Right ventricle myocardium inferior (tissue), 1 donor: ENCODE measurements at regions of chr10 and their contacts with region 1.

Region 1: DNA sequence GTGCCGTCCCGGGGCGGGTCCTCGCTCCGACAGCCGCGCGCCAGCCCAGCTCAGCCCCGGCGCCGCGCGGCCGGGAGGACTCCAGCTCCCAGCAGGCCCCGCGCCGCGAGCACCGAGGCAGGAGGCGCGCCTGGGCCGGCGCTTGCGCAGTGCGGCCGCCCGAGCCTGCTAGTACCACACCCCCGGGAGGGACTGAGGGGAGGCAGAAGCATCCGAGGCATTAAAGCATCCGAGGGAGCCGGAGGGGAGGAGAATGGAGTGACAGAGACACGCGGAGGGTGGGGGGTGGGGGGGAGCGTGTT is at the start of gene GRK5:
- DNase-seq: peak; percentile 99
- ATAC-seq: peak; percentile 96
- total RNA-seq, gene GRK5: 48.6 TPM

Region 2: GRCh38 chr10:119270762-119271366 is 63.5 kb after region 1 on chr10:
- intact Hi-C with region 1: loop called (anchors 2 kb)
- DNase-seq: peak; percentile 93
- ATAC-seq: peak; percentile 79

Region 3: GRCh38 chr10:119341459-119342301 is 134.4 kb after region 1 on chr10:
- intact Hi-C with region 1: loop called (anchors 2 kb)
- DNase-seq: peak; percentile 88
- ATAC-seq: peak; percentile 90

Region 4: DNA sequence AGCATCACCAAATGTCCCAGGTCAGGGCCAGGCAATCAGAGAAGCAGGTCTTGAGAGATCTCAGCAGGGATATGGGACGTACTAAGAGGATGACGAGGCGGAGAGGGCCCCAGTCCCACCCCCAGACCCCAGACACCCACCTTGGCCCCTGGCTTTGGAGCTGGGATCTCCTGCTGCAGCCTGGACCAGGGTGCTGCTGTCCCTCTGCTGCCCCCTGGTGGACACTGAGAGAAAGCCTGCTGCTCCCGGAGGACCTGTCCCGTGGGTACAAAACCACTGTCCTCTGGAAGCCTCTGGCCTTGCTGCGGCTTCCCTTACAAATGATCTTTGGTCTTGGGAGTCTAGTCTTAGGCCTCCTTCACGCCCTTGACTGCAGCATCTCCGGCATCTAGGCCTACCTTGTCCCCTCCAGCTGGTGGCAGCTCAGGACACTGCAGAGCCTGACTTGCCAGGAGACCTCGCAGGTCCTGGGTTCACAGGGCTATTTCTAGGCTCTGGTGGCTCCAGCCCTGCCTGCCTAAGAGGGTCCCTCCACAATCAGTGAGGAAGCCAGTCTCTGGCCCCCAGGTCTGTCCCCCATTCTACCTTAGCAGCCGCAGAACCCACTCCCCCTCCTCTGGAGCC is 238.1 kb after region 1 on chr10:
- intact Hi-C with region 1: loop called (anchors 2 kb)
- DNase-seq: peak; percentile 89
- ATAC-seq: peak; percentile 48

Region 5: GRCh38 chr10:119650692-119651513 is 443.6 kb after region 1 on chr10 and contains the start of gene BAG3:
- intact Hi-C with region 1: loop called (anchors 5 kb)
- DNase-seq: peak; percentile 97
- ATAC-seq: peak; percentile 94
- total RNA-seq, gene BAG3: 152 TPM